ENCODE measurements at regions of chr11 and their contacts with region 1.

Region 1: DNA sequence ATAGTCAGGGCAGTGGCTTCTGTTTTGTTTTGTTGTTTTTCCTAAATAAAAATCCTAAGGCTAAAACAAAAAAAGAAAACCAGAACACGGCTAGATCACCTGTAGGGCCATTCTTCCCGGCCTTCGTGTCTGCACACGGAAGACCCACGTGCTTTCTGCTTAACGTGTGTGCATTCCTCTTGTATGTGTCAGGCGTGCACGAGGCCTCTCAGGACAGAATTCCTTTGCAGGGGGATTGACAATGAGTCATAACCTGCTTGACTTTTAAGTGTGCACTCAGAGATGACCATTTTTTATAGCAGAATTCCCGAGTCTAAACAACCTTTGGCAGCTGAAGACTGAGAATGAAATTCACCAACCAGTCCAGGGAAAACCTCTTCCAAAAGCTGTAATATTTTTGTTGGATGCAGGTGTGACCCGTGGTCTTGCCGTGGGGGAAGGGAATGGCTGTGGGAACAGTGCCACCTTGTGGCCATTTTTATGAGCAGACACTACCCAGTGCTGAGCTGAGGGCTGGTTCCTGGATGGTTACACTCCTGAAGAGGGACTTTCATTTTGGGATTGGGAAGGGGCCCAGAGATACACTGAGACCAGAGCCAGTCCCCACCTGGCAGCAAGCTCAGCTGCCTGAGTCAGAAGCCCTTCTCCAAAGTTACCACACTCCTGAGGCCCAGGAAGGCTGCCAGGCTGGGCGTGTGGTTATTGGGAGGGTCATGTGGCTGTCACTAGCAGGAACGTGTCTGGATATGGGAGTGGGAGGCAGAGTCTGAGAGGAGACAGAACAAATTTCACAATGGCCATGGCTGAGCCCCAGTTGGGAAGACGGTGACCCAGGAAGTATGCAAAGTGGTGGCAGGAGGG is 35.8 kb upstream of the DKK3 start:
- DNase-seq: peak; percentile 77
- ATAC-seq: peak; percentile 84
- H3K4me3 Mint-ChIP-seq: no peak overlapping the region
- H3K27ac Mint-ChIP-seq: no peak overlapping the region
- H3K4me1 Mint-ChIP-seq: peaks cover 9% of the 10 kb centered on the region
- H3K27me3 Mint-ChIP-seq: peaks cover 2% of the 10 kb centered on the region; the same call in 1 of the 2 replicates
- CTCF ChIP-seq: peak; percentile 78

Region 2: DNA sequence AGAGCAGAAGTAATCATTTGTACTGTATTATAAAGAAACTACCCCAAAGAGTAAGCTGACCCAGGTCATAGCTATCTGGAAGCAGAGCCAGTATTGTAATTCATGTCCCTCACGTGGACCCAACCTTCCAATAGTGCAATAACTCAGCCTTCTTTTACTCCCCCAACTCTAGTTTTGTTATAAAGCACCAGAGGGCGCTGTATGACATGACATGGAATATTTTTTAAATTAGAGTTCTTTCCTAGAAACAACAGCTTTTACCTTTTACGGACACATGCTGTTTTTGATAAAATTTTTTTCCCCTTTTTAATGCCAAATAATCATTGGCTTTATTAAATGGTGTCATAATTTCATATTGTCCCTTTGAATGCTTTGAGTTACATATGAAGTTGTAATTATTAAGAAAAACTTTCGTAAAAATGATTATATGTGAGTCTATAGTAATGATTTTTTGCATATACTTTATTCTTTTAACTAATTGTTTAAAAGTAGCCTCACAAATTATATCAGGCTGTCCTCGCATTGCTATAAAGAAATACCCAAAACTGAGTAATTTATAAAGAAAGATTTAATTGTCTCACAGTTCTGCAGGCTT is 112.6 kb before region 1 on chr11:
- CTCF ChIA-PET with region 1: interaction called, 27 read pairs
- POLR2A ChIA-PET with region 1: no interaction called
- DNase-seq: no peak
- ATAC-seq: peak; percentile 80
- H3K4me3 Mint-ChIP-seq: no peak overlapping the region
- H3K27ac Mint-ChIP-seq: no peak overlapping the region
- H3K4me1 Mint-ChIP-seq: 0 out of 2 replicates have a peak, but pooled peaks cover 2% of the 10 kb centered on the region
- H3K27me3 Mint-ChIP-seq: no peaks in the 10 kb centered on the region
- CTCF ChIP-seq: peak; percentile 31

Region 3: GRCh38 chr11:12008790-12009616 is 35.2 kb before region 1 on chr11:
- CTCF ChIA-PET with region 1: interaction called, 24 read pairs
- POLR2A ChIA-PET with region 1: interaction called, 3 read pairs
- DNase-seq: peak; percentile 81
- ATAC-seq: peak; percentile 83
- H3K4me3 Mint-ChIP-seq: peak overlapping the region; percentile 92
- H3K27ac Mint-ChIP-seq: peak overlapping the region; percentile 71
- H3K4me1 Mint-ChIP-seq: peaks cover 28% of the 10 kb centered on the region
- H3K27me3 Mint-ChIP-seq: peaks cover 37% of the 10 kb centered on the region
- CTCF ChIP-seq: no peak

Region 4: GRCh38 chr11:12029738-12030363 is 14.3 kb before region 1 on chr11:
- CTCF ChIA-PET with region 1: no interaction called
- POLR2A ChIA-PET with region 1: no interaction called
- DNase-seq: no peak
- ATAC-seq: no peak
- H3K4me3 Mint-ChIP-seq: no peak overlapping the region
- H3K27ac Mint-ChIP-seq: no peak overlapping the region
- H3K4me1 Mint-ChIP-seq: peaks cover 5% of the 10 kb centered on the region
- H3K27me3 Mint-ChIP-seq: no peaks in the 10 kb centered on the region
- CTCF ChIP-seq: no peak

Region 5: DNA sequence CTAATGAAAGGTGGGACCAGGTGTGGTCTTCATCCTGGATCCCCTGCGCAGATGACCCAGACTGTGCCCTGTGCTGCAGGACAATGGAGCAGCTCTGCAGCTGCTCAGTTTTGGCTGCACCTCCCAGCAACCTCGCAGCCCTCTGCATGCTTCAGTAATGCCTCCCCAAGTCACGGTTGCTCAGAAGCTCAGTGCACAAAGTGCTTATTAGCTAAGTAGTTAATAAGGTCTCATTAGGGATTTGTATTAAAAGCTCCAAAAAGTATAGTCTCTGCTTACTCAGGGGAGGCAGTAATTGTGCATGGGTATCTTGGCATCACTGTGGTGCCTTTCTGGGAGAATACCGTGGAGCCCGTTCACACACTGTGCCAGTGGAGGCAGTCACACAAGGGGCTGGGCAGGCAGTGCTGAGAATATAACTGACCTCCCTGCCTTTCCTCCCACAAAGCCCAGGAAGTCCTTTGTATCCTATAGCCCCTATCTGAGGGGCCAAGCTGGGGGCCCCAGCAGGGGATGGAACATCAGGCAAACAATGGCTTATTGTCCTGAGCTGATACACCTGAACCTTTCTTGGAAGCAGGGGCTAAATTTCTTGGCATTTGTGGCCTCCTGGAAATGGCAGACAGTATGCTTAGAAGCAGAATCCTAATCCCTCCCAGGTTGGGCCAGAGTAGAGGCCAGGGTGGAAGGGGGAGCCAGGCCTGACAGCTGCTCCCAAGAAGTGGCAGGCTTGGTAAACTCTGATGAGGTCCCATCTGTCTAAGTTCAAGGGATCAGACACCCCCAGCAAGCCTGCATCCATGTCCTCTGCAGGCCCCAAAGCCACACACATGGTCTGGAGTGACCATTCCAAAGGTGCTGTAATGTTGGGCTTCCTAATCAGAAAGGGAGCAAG is 207.7 kb after region 1 on chr11:
- CTCF ChIA-PET with region 1: interaction called, 12 read pairs
- POLR2A ChIA-PET with region 1: no interaction called
- DNase-seq: no peak
- ATAC-seq: peak; percentile 26
- H3K4me3 Mint-ChIP-seq: no peak overlapping the region
- H3K27ac Mint-ChIP-seq: no peak overlapping the region
- H3K4me1 Mint-ChIP-seq: peaks cover 40% of the 10 kb centered on the region
- H3K27me3 Mint-ChIP-seq: no peaks in the 10 kb centered on the region; the same call in 1 of the 2 replicates
- CTCF ChIP-seq: no peak

Region 6: DNA sequence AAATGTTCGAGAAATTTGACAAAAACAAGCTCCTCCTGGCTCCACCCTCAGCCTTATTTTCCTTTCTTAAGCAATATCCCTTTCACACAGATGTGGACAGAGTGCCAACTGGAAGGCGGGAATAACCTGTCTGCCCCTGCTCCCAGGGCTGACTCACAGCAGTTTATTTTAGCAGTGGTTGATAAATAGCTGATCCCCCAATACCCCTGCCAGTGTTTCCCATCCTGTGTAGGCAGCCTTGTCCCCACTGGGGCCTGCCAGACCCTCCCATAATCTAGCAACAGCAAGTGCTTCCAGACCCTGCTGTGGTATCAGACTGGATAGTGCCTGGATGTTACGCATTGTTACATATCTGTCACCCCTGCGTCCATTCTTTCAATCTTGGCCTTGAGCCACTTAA is 386.8 kb after region 1 on chr11:
- CTCF ChIA-PET with region 1: no interaction called
- POLR2A ChIA-PET with region 1: no interaction called
- DNase-seq: no peak
- ATAC-seq: no peak
- H3K4me3 Mint-ChIP-seq: no peak overlapping the region
- H3K27ac Mint-ChIP-seq: no peak overlapping the region
- H3K4me1 Mint-ChIP-seq: peaks cover 16% of the 10 kb centered on the region
- H3K27me3 Mint-ChIP-seq: no peaks in the 10 kb centered on the region
- CTCF ChIP-seq: no peak

Measured in WTC11 (cell line).